MCF 10A (cell line): ENCODE measurements at regions of chr2 and their contacts with region 1.

Region 1: GRCh38 chr2:222969491-222969890 is 82.5 kb upstream of the KCNE4 start:
- DNase-seq: peak; percentile 80
- H3K4me3 Mint-ChIP-seq: no peak overlapping the region
- H3K27ac Mint-ChIP-seq: no peak overlapping the region
- H3K4me1 Mint-ChIP-seq: peaks cover 6% of the 10 kb centered on the region
- H3K27me3 Mint-ChIP-seq: no peaks in the 10 kb centered on the region
- CTCF ChIP-seq: no peak

Region 2: DNA sequence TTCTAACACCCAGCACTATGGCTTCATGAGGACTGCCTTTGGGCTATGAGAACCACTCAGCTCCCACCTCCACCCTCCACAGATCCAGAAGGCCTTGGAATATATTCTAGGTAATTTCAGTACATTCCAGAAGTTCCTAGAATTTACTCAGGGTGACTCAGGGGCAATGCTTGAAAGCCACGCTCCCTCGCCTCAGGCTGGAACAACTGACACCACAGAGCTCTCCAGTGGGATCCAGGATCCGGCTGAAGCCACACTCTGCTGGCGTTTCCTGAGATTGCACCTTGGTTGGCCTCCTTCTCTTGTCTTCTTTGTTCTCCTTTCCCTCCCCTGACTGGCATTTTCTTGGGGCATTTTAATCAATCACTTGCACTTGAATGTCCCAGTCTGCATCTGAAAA is 10.2 kb before region 1 on chr2:
- CTCF ChIA-PET with region 1: interaction called, 18 read pairs
- POLR2A ChIA-PET with region 1: interaction called, 9 read pairs
- intact Hi-C with region 1: no loop called
- DNase-seq: peak; percentile 83
- H3K4me3 Mint-ChIP-seq: no peak overlapping the region
- H3K27ac Mint-ChIP-seq: no peak overlapping the region
- H3K4me1 Mint-ChIP-seq: peaks cover 23% of the 10 kb centered on the region
- H3K27me3 Mint-ChIP-seq: no peaks in the 10 kb centered on the region
- CTCF ChIP-seq: peak; percentile 50

Region 3: GRCh38 chr2:223101340-223102039 is 132.0 kb after region 1 on chr2:
- CTCF ChIA-PET with region 1: interaction called, 35 read pairs
- POLR2A ChIA-PET with region 1: interaction called, 3 read pairs
- intact Hi-C with region 1: loop called (anchors 1 kb)
- DNase-seq: peak; percentile 93
- H3K4me3 Mint-ChIP-seq: no peak overlapping the region
- H3K27ac Mint-ChIP-seq: no peak overlapping the region
- H3K4me1 Mint-ChIP-seq: peaks cover 13% of the 10 kb centered on the region
- H3K27me3 Mint-ChIP-seq: no peaks in the 10 kb centered on the region
- CTCF ChIP-seq: peak; percentile 59

Region 4: GRCh38 chr2:223383315-223383714 is 413.8 kb after region 1 on chr2:
- CTCF ChIA-PET with region 1: interaction called, 11 read pairs
- POLR2A ChIA-PET with region 1: no interaction called
- intact Hi-C with region 1: no loop called
- DNase-seq: no peak
- H3K4me3 Mint-ChIP-seq: no peak overlapping the region
- H3K27ac Mint-ChIP-seq: no peak overlapping the region
- H3K4me1 Mint-ChIP-seq: no peaks in the 10 kb centered on the region
- H3K27me3 Mint-ChIP-seq: no peaks in the 10 kb centered on the region
- CTCF ChIP-seq: no peak

Region 5: GRCh38 chr2:223601932-223602666 is 632.6 kb after region 1 on chr2 and contains the start of gene SCG2:
- CTCF ChIA-PET with region 1: interaction called, 6 read pairs
- POLR2A ChIA-PET with region 1: interaction called, 3 read pairs
- intact Hi-C with region 1: loop called (anchors 5 kb)
- DNase-seq: peak; percentile 78
- H3K4me3 Mint-ChIP-seq: no peak within 1 kb of the TSS
- H3K27ac Mint-ChIP-seq: no peak within 1 kb of the TSS
- H3K4me1 Mint-ChIP-seq: peaks cover 17% of the 10 kb centered on the region
- H3K27me3 Mint-ChIP-seq: no peaks in the 10 kb centered on the region
- CTCF ChIP-seq: peak; percentile 26
- total RNA-seq, gene SCG2: 0.52 and 0.84 TPM in 2 replicates

Region 6: GRCh38 chr2:223727562-223727961 is 758.1 kb after region 1 on chr2:
- CTCF ChIA-PET with region 1: interaction called, 10 read pairs
- POLR2A ChIA-PET with region 1: interaction called, 3 read pairs
- intact Hi-C with region 1: no loop called
- DNase-seq: peak; percentile 80
- H3K4me3 Mint-ChIP-seq: no peak overlapping the region
- H3K27ac Mint-ChIP-seq: no peak overlapping the region
- H3K4me1 Mint-ChIP-seq: peaks cover 24% of the 10 kb centered on the region
- H3K27me3 Mint-ChIP-seq: no peaks in the 10 kb centered on the region
- CTCF ChIP-seq: peak; percentile 42